Heart right ventricle (tissue), 16 donors: ENCODE measurements at regions of chr19 and their contacts with region 1.

Region 1: GRCh38 chr19:35090506-35091237 is 25.0 kb upstream of the FXYD3 start:
- DNase-seq: peak in 1 of 2 donors; percentile 57
- ATAC-seq: peak; percentile 74 to 92 (median 86)
- H3K4me3 ChIP-seq: no peak overlapping the region
- H3K27ac ChIP-seq: no peak overlapping the region
- H3K4me1 ChIP-seq: peaks cover 0 to 10% (median 9%) of the 10 kb centered on the region in 9 donors
- H3K27me3 ChIP-seq: peaks cover 0 to 35% (median 13%) of the 10 kb centered on the region in 7 donors
- CTCF ChIP-seq: peak; percentile 43 to 71 (median 67)

Region 2: GRCh38 chr19:35044317-35045117 is 46.2 kb before region 1 on chr19:
- intact Hi-C with region 1: loop called in 1 of 10 experiments (anchors 5 kb)
- DNase-seq: peak; percentile 55 to 67
- ATAC-seq: no peak
- H3K4me3 ChIP-seq: no peak overlapping the region
- H3K27ac ChIP-seq: no peak overlapping the region
- H3K4me1 ChIP-seq: peaks cover 10 to 54% (median 32%) of the 10 kb centered on the region in 9 donors
- H3K27me3 ChIP-seq: peaks cover 0 to 7% (median 0%) of the 10 kb centered on the region in 7 donors
- CTCF ChIP-seq: peak; percentile 90 to 99 (median 97)

Region 3: DNA sequence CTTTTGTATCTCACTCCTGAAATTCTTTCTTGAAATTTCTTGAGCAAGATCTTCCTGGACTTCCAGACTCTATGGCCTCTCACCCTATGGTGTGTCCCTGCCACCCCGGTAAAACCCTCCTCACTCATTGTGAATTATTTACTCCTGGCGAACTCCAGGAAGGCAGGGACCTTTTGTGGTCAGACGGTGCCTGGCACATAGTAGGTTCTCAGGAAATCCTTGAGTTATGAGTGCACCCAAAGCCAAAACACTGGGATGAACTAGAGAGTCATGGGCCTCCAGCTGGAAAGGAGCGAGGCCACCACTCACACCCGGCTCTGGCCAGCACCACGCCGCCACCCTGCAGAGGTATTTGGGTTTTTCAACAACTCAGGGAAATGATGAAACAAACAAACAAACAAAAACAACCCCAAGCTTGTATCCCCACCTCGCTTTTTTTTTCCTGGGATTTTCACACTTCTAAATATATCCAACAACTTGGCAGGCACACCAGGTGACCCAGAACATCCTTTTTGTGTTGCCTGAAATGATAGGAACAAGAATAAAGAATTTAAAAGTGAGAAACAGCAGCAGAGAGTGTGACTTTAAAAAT is 38.0 kb before region 1 on chr19:
- intact Hi-C with region 1: loop called in 2 of 10 experiments (anchors 5 kb)
- DNase-seq: no peak
- ATAC-seq: no peak
- H3K4me3 ChIP-seq: no peak overlapping the region
- H3K27ac ChIP-seq: peak overlapping the region in 1 of 10 donors; percentile 14
- H3K4me1 ChIP-seq: peaks cover 0 to 19% (median 9%) of the 10 kb centered on the region in 9 donors
- H3K27me3 ChIP-seq: peaks cover 0 to 7% (median 0%) of the 10 kb centered on the region in 7 donors
- CTCF ChIP-seq: no peak